GM23248 (cell line): ENCODE measurements at regions of chr19 and their contacts with region 1.

Region 1: DNA sequence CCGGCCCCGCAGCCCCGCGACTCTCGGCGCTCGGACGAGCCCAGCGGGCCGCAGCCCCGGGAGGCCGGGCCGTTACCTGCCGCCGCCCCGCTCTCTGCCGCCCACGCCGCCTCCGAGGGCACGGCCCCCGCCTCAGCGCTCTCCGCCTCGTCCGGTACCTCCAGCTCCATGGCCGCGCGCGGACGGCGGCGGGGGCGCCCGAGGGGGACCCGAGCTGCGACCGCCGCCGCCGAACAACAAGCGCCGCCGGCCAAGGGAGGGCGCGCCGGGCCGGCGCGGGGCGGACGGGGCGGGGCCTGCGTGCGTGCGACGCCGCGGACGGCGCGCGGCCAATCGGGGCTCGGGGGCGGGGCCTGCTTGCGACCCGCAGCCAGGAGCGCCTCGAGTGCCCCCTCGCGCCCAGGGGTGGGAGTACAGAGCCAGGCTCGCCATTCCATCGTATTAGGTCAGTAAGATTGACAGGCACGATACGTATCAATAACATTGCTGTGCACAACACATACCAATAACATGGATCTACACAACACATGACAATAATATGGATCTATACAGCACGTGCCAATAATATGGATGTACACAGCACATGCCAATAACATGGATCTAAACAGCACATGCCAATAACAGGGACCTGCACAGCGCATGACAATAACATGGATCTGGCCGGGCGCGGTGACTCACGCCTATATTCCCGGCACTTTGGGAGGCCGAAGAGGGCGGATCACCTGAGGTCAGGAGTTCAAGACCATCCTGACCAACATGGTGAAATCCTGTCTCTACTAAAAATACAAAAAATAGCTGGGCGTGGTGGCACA is at the start of gene PIP5K1C:
- DNase-seq: peak; percentile 94
- H3K4me3 ChIP-seq: peak within 1 kb of the TSS; percentile 83
- H3K27ac ChIP-seq: peak within 1 kb of the TSS; percentile 52
- H3K4me1 ChIP-seq: 0 out of 2 replicates have a peak, but pooled peaks cover 3% of the 10 kb centered on the region
- H3K27me3 ChIP-seq: no peaks in the 10 kb centered on the region
- total RNA-seq, gene PIP5K1C: 34.0 and 43.1 TPM in 2 replicates

Region 2: DNA sequence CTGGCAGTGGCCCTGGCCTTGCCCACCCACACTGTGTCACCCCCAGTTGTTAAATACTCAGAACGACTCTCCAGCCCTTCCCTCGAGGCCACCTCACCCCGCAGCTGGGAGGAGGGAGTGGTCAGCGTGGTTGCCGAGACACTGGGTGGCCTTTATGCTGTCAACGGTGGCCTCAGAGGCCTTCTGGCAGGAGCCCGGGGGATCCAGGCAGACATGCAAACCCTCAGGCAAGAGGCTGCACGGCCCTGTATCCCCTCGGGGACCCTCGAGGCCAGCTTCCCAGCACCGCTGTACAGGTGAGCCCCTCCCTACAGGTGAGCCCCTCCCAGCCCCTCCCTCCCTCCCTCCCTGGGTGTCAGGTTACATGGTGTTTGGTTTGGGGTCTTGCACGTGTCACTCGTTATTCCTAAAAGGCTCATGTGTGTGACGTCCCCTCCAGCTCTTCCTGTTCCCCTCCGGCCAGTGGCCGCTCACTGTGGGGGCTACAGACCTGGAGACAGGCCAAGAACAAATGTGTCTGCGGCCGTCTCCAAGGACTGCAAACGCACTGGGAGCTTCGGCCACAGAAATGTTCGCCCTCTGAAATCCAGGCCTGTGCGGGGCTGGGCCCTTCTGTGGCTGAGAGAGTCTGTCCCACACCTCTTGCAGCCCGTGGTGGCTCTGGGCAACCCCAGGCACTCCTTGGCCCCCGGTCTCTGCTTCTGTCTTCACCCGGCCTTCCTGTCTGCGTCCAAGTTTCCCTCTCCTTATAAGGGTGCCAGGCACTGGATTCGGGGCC is 161.3 kb before region 1 on chr19 and contains the start of gene TEKTIP1:
- in situ Hi-C with region 1: loop called (anchors 10 kb)
- DNase-seq: peak; percentile 41
- H3K4me3 ChIP-seq: no peak within 1 kb of the TSS
- H3K27ac ChIP-seq: no peak within 1 kb of the TSS
- H3K4me1 ChIP-seq: no peaks in the 10 kb centered on the region
- H3K27me3 ChIP-seq: no peaks in the 10 kb centered on the region
- total RNA-seq, gene TEKTIP1: not detected in 2 replicates